MCF 10A (cell line): ENCODE measurements at regions of chr12 and their contacts with region 1.

Region 1: GRCh38 chr12:118061011-118061875 is at the start of gene WSB2:
- DNase-seq: no peak
- H3K4me3 Mint-ChIP-seq: peak within 1 kb of the TSS; percentile 89
- H3K27ac Mint-ChIP-seq: peak within 1 kb of the TSS; percentile 93
- H3K4me1 Mint-ChIP-seq: peaks cover 21% of the 10 kb centered on the region
- H3K27me3 Mint-ChIP-seq: no peaks in the 10 kb centered on the region
- CTCF ChIP-seq: no peak
- total RNA-seq, gene WSB2: 55.9 and 99.8 TPM in 2 replicates

Region 2: DNA sequence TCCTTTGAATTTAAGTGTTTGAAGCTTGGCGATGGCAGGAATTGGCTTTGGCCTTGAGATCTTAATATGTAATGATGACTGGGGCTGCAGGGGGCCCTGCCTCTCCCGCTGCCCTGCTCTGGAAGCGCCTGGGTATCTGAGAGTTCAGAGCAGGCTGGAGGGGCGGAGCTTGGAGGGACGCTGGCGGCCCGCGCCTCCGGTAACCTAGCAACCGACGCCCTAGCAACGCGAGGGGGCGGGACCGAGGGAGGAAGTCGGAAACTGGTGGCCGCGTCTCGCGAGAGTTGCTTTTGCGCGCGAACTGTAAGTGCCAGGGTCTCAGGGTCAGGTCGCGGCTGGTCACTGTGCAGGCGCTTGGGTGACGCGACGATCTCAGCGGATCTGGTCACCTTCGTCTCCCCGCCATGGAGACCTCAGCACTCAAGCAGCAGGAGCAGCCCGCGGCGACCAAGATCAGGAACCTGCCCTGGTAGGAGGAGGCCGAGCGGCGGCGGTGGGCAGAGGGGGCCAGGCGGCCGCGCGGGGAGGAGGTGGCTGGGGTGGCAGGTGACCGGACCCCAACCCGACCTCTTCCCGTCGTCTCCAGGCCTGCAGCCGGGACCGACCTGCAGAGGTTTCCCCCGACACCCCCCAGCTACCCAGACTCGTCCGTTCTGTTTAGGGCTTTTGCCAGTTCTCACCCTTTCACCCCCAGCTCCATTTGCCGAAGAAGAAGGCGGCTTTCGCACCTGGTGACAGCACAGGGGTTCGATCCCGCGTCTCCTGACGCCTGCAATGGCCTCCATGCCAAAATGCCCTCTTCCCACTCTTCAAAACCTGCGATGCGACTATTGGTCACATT is 44.6 kb before region 1 on chr12 and contains the start of gene RFC5:
- CTCF ChIA-PET with region 1: interaction called, 3 read pairs
- POLR2A ChIA-PET with region 1: interaction called, 4 read pairs
- intact Hi-C with region 1: loop called (anchors 2 kb)
- DNase-seq: peak; percentile 97
- H3K4me3 Mint-ChIP-seq: peak within 1 kb of the TSS; percentile 87
- H3K27ac Mint-ChIP-seq: peak within 1 kb of the TSS; percentile 77
- H3K4me1 Mint-ChIP-seq: peaks cover 6% of the 10 kb centered on the region
- H3K27me3 Mint-ChIP-seq: no peaks in the 10 kb centered on the region
- CTCF ChIP-seq: no peak
- total RNA-seq, gene RFC5: 10.1 and 13.9 TPM in 2 replicates

Region 3: GRCh38 chr12:118103604-118104382 is 42.5 kb after region 1 on chr12 and contains the start of gene VSIG10:
- CTCF ChIA-PET with region 1: no interaction called
- POLR2A ChIA-PET with region 1: interaction called, 49 read pairs
- intact Hi-C with region 1: loop called (anchors 2 kb)
- DNase-seq: peak; percentile 52
- H3K4me3 Mint-ChIP-seq: peak within 1 kb of the TSS; percentile 80
- H3K27ac Mint-ChIP-seq: no peak within 1 kb of the TSS
- H3K4me1 Mint-ChIP-seq: peaks cover 12% of the 10 kb centered on the region
- H3K27me3 Mint-ChIP-seq: no peaks in the 10 kb centered on the region
- CTCF ChIP-seq: no peak
- total RNA-seq, gene VSIG10: 10.9 and 17.3 TPM in 2 replicates